ENCODE measurements at regions of chr10 and their contacts with region 1.

Region 1: GRCh38 chr10:91908337-91909116 is 759 bp downstream of the FGFBP3 start:
- DNase-seq: peak; percentile 69
- H3K4me3 Mint-ChIP-seq: peak overlapping the region; percentile 88
- H3K27ac Mint-ChIP-seq: peak overlapping the region; percentile 78
- H3K4me1 Mint-ChIP-seq: peaks cover 20% of the 10 kb centered on the region
- H3K27me3 Mint-ChIP-seq: peaks cover 12% of the 10 kb centered on the region

Region 2: GRCh38 chr10:91298224-91298871 is 610.2 kb before region 1 on chr10:
- intact Hi-C with region 1: loop called (anchors 5 kb)
- DNase-seq: peak; percentile 69
- H3K4me3 Mint-ChIP-seq: peak overlapping the region; percentile 46
- H3K27ac Mint-ChIP-seq: no peak overlapping the region
- H3K4me1 Mint-ChIP-seq: peaks cover 9% of the 10 kb centered on the region
- H3K27me3 Mint-ChIP-seq: peaks cover 30% of the 10 kb centered on the region

Region 3: DNA sequence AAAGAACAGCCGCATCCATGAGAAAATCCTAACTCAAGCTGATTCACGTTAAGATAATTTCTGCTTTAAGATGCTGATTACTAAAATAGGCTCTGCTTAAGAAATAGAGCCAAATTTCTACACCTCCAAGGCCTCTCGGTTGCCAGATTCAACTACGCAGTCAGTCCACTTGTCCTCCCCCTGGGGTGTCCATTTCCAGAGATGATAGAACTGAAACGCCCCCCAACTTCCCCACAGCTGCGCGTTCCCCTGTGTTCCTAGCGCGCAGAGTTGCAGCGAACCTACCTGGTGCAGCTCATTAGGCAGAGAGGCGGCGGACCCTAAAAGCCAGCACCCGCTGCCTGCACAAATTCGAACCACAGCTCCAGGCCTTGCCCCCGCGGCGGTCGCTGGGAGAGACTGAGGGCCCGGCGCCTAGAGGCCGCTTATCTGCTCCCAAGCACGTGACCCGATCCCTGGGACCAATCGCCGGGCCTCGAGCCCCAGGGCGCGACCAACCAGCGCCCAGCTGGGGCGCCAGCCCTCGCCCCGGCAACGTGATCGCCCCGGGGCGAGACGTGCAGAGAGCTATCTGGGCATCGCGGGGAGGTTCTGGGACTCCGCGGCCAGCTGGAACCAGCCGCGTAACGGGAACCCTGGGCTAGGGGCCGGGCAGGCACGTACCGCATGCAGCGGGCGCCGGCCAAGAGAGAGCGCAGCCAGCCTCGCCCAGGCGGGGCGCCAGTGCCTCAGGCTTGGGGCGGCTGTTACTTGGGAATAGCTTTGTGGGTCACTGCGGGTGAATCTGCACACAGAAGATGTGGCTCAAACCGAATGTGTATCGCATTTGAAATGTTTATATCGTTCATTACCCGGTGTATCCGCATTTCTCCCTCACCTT is 275.6 kb before region 1 on chr10 and contains the start of gene PPP1R3C:
- intact Hi-C with region 1: loop called (anchors 2 kb)
- DNase-seq: peak; percentile 41
- H3K4me3 Mint-ChIP-seq: peak within 1 kb of the TSS; percentile 72
- H3K27ac Mint-ChIP-seq: no peak within 1 kb of the TSS
- H3K4me1 Mint-ChIP-seq: peaks cover 6% of the 10 kb centered on the region
- H3K27me3 Mint-ChIP-seq: peaks cover 55% of the 10 kb centered on the region
- total RNA-seq, gene PPP1R3C: 0.14 and 0.21 TPM in 2 replicates

Region 4: GRCh38 chr10:91768123-91768522 is 140.4 kb before region 1 on chr10:
- intact Hi-C with region 1: no loop called
- DNase-seq: no peak
- H3K4me3 Mint-ChIP-seq: no peak overlapping the region
- H3K27ac Mint-ChIP-seq: no peak overlapping the region
- H3K4me1 Mint-ChIP-seq: no peaks in the 10 kb centered on the region
- H3K27me3 Mint-ChIP-seq: peaks cover 24% of the 10 kb centered on the region

Region 5: DNA sequence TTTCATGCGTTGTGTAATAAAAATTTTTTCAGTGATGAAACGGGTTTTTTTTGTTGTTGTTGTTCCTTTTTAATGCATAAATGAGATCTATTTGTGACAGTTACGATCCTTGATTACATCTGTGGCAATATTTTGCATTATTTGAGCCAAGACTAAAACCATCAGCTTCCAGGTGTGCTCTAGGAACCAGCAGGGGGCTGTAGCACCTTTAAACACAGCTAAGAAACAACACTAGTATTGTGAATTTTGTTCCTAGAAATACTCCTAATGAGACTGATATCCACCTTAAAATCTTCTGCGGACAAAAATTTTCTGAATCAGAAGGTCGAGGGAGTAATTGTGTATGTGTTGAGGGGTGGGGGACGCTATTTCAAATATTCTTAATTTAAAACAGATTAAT is 51.9 kb before region 1 on chr10:
- intact Hi-C with region 1: loop called (anchors 1 kb)
- DNase-seq: no peak
- H3K4me3 Mint-ChIP-seq: no peak overlapping the region
- H3K27ac Mint-ChIP-seq: no peak overlapping the region
- H3K4me1 Mint-ChIP-seq: no peaks in the 10 kb centered on the region
- H3K27me3 Mint-ChIP-seq: no peaks in the 10 kb centered on the region

Region 6: DNA sequence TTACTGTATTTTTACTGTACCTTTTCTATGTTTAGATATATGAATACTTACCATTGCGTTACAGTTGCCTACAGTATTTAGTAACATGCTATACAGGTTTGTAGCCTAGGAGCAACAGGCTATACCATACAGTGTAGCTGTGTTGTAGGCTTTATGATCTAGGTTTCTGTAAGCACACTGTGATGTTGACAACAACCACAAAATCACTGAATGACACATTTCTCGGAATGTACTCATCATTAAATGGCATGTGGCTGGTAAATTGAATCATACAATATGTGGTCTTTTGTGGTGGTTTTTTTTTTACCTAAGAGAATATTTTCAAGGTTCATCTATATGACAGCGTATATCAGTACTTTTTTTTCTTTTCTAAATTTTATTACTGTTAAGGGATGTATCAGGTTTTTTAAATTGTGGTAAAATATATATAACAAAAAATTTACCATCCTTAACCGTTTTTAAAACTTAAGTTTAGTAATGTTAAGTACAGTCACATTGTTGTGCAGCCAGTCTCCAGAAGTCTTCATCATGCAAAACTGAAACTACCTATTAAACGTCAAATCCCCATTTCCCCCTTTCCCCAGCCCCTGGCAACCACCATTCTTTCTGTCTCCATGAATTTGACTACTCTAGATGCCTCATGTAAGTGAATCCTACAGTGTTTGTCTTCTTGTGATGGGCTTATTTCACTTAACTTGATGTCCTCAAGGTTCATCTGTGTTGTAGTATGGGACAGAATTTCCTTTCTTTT is 36.5 kb after region 1 on chr10:
- intact Hi-C with region 1: loop called (anchors 2 kb)
- DNase-seq: no peak
- H3K4me3 Mint-ChIP-seq: peak overlapping the region; percentile 55
- H3K27ac Mint-ChIP-seq: peak overlapping the region; percentile 78
- H3K4me1 Mint-ChIP-seq: peaks cover 26% of the 10 kb centered on the region
- H3K27me3 Mint-ChIP-seq: no peaks in the 10 kb centered on the region